HepG2 (cell line): ENCODE measurements at regions of chr20 and their contacts with region 1.

Region 1: DNA sequence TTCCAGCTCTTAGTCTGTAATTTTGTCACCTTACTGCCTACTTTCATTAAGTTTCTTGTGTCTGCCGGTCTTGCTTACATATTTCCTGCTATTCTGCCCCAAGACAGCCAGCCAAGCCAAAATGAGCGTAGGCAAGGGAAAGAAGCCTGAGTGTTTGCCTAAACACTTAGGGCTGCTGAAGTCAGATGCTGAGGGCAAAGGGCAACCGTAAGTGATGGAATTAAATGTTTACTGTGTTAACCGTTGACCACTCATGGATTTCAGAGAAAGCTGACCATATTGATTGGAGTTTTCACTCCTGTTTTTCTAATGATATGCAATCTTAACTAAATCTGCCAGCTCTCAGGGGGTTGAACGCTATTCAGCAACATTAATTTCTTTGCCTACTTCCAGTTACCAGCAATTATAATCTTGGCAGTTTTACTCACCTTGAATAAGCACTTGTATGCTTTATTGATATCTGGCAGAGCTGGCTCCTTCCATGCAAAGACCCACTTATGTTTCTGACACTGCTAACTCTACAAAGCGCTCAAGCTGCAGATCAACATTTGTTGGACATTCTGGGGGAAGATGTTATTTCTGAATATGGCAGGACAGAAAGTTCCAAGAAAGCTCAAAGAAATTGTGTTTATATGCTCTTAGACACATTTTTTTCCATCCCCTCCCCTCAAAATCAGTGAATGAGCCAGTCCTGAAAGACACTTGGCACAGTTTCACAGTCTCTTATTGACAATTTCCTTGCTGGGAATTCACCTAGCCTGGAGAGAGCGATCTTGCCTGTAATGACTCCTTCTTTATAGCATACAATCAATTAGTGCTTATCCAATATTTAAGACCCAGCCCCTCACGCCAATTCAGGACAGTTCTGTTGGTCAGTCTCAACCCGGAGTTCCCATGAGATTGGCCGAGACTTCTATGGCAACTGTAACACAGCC is 183.8 kb downstream of the PLCB1 start:
- DNase-seq: peak; percentile 20
- ATAC-seq: peak; percentile 76
- H3K4me3 ChIP-seq: no peak overlapping the region
- H3K27ac ChIP-seq: no peak overlapping the region
- H3K4me1 ChIP-seq: peaks cover 16% of the 10 kb centered on the region
- H3K27me3 ChIP-seq: no peaks in the 10 kb centered on the region
- CTCF ChIP-seq: no peak
- EP300 ChIP-seq: no peak
- POLR2A ChIP-seq: no peak
- RAD21 ChIP-seq: no peak

Region 2: GRCh38 chr20:7980332-7981046 is 335.4 kb before region 1 on chr20:
- CTCF ChIA-PET with region 1: no interaction called
- POLR2A ChIA-PET with region 1: no interaction called
- in situ Hi-C with region 1: no loop called
- intact Hi-C with region 1: no loop called
- DNase-seq: peak; percentile 79
- ATAC-seq: peak; percentile 88
- H3K4me3 ChIP-seq: peak overlapping the region in 1 of 3 experiments; percentile 0; a peak in 1 of 6 replicates
- H3K27ac ChIP-seq: no peak overlapping the region
- H3K4me1 ChIP-seq: peaks cover 22% of the 10 kb centered on the region
- H3K27me3 ChIP-seq: no peaks in the 10 kb centered on the region
- CTCF ChIP-seq: peak; percentile 76
- EP300 ChIP-seq: no peak
- POLR2A ChIP-seq: no peak
- RAD21 ChIP-seq: peak; percentile 50

Region 3: GRCh38 chr20:8331740-8332412 is 16.0 kb after region 1 on chr20:
- CTCF ChIA-PET with region 1: no interaction called
- POLR2A ChIA-PET with region 1: no interaction called
- in situ Hi-C with region 1: no loop called
- intact Hi-C with region 1: loop called (anchors 2 kb)
- DNase-seq: peak; percentile 86
- ATAC-seq: peak; percentile 60
- H3K4me3 ChIP-seq: peak overlapping the region in 2 of 3 experiments; percentile 1 to 44; a peak in 2 of 6 replicates
- H3K27ac ChIP-seq: peak overlapping the region; percentile 77
- H3K4me1 ChIP-seq: peaks cover 78% of the 10 kb centered on the region
- H3K27me3 ChIP-seq: no peaks in the 10 kb centered on the region
- CTCF ChIP-seq: no peak
- EP300 ChIP-seq: peak in 1 of 2 experiments; percentile 58; a peak in 2 of 4 replicates
- POLR2A ChIP-seq: no peak
- RAD21 ChIP-seq: peak; percentile 28; the same call in 1 of the 2 replicates